Mammary epithelial cell (primary cell): ENCODE measurements at regions of chr9 and their contacts with region 1.

Region 1: GRCh38 chr9:109779711-109780452 is at the start of gene PALM2AKAP2:
- DNase-seq: peak; percentile 73
- H3K4me3 ChIP-seq: peak within 1 kb of the TSS; percentile 71 to 77 (median 72)
- H3K27ac ChIP-seq: peak within 1 kb of the TSS; percentile 52
- H3K4me1 ChIP-seq: peaks cover 29% of the 10 kb centered on the region
- H3K27me3 ChIP-seq: no peaks in the 10 kb centered on the region
- CTCF ChIP-seq: no peak
- total RNA-seq, gene PALM2AKAP2: 22.3 to 49.0 TPM

Region 2: GRCh38 chr9:109477258-109478050 is 302.4 kb before region 1 on chr9:
- CTCF ChIA-PET with region 1: no interaction called
- dilution Hi-C with region 1: no loop called
- in situ Hi-C with region 1: no loop called
- intact Hi-C with region 1: no loop called
- DNase-seq: peak; percentile 44
- H3K4me3 ChIP-seq: no peak overlapping the region
- H3K27ac ChIP-seq: peak overlapping the region; percentile 10
- H3K4me1 ChIP-seq: peaks cover 26% of the 10 kb centered on the region
- H3K27me3 ChIP-seq: no peaks in the 10 kb centered on the region
- CTCF ChIP-seq: no peak

Region 3: DNA sequence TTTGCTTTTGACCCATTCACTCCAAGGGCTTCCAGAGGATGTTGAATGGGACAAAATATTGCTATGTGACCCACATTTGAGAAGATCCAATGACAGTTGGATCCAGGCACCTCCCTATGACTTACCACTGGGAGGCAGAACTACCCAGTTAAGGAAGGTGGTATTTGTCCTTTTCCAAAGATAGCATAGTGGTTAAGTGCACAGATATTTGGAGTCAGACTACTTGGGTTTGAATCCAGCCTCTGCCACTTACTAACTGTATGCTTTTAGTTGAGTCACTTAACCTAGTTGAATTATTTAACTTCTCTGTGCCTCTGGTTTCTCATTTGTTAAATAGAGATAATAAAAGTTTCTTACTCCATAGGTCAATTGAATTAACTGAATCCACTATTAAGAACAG is 74.4 kb before region 1 on chr9:
- CTCF ChIA-PET with region 1: no interaction called
- dilution Hi-C with region 1: no loop called
- in situ Hi-C with region 1: no loop called
- intact Hi-C with region 1: loop called (anchors 1 kb)
- DNase-seq: peak; percentile 70
- H3K4me3 ChIP-seq: no peak overlapping the region
- H3K27ac ChIP-seq: no peak overlapping the region
- H3K4me1 ChIP-seq: no peaks in the 10 kb centered on the region
- H3K27me3 ChIP-seq: no peaks in the 10 kb centered on the region
- CTCF ChIP-seq: peak in 1 of 2 donors; percentile 47